ENCODE measurements at regions of chr6 and their contacts with region 1.

Region 1: DNA sequence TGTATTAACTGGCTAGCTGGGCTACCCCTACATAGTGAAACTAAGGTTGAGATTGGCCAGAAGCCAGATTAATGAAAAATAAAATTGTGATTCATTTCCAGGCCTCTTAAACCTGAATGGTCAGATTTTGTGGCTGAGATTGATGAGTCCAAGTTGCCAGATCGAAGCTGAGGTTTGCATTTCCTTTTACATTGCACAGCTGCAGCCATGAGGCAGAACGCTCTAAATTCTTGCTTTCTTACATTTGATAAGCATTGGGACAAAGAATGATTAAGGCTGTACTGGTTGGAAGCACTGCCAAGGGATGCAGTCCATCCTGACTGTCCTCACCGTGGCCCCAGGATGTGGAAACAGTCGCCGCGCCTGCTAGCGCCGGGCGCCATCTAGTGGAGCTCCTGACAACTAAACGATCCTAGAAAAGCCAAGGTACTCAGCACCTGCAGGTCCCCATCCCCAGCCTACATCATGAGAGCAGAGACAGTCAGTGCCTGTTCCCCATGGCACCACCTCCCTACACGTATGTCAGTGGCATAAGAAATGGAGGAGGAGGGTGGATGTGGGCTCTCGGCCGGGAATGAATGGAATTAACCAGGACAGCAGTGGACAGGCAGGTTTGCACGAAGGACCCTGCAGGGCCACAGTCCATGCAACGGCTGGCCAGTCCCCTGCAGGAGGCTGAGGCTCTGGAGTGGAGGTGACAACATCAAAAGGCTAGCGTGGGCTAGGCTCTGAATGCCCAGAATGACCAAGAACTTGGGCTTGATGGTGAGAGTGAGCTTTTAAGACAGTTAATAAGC is 19.0 kb downstream of the PXDC1 start:
- DNase-seq: no peak
- H3K4me3 ChIP-seq: no peak overlapping the region
- CTCF ChIP-seq: peak; percentile 84

Region 2: GRCh38 chr6:3410385-3411360 is 321.9 kb before region 1 on chr6:
- CTCF ChIA-PET with region 1: interaction called, 19 read pairs
- POLR2A ChIA-PET with region 1: no interaction called
- DNase-seq: no peak
- H3K4me3 ChIP-seq: no peak overlapping the region
- CTCF ChIP-seq: peak; percentile 72

Region 3: GRCh38 chr6:3721810-3722626 is 10.5 kb before region 1 on chr6:
- CTCF ChIA-PET with region 1: interaction called, 49 read pairs
- POLR2A ChIA-PET with region 1: interaction called, 3 read pairs
- DNase-seq: no peak
- H3K4me3 ChIP-seq: no peak overlapping the region
- CTCF ChIP-seq: no peak

Region 4: DNA sequence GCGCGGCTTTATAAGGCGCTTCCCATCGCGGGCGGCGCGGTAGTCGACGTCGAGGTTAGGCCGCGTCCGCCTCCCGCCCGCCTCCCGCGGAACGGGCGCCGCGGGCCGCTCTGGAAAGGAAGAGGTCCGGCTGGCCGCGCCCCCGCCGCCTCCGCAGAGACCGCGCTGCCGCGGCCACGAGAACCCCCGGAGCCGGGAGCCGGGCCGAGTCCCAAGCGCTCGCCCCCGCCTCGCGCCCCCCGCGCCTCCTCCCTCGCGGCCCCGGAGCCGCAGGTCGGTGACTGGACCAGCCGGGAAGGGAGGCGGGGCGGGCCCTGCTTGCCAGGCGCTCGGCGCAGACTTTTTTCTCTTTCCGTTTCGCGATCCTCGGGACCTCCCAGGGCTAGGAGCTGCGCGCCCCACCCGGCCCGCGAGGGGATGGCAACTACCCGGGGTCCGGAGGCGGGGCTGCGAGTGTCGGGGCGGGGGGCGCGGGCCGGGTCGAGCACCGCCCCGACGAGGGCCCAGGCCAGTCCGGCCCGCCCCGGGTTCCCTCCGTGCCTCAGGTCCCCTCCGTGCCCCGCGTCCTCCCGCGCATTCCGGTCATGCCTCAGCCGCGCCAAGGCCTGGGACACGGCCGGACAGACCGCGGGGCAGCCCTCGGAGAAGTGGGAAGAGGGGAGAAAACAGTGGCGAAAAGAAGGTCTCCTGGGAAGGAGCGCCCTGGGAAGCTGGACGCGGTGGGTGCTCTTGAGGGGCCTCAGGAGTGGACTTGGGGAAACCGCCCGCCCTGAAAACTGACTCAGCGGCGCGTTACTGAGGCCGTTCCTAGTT is 19.4 kb after region 1 on chr6:
- CTCF ChIA-PET with region 1: interaction called, 13 read pairs
- POLR2A ChIA-PET with region 1: interaction called, 3 read pairs
- DNase-seq: no peak
- H3K4me3 ChIP-seq: peak overlapping the region; percentile 92
- CTCF ChIP-seq: peak; percentile 53

Region 5: GRCh38 chr6:4008324-4009047 is 275.9 kb after region 1 on chr6:
- CTCF ChIA-PET with region 1: interaction called, 10 read pairs
- POLR2A ChIA-PET with region 1: no interaction called
- DNase-seq: peak; percentile 76
- H3K4me3 ChIP-seq: no peak overlapping the region
- CTCF ChIP-seq: peak; percentile 44